Right ventricle myocardium inferior (tissue), 1 donor: ENCODE measurements at regions of chr11 and their contacts with region 1.

Region 1: DNA sequence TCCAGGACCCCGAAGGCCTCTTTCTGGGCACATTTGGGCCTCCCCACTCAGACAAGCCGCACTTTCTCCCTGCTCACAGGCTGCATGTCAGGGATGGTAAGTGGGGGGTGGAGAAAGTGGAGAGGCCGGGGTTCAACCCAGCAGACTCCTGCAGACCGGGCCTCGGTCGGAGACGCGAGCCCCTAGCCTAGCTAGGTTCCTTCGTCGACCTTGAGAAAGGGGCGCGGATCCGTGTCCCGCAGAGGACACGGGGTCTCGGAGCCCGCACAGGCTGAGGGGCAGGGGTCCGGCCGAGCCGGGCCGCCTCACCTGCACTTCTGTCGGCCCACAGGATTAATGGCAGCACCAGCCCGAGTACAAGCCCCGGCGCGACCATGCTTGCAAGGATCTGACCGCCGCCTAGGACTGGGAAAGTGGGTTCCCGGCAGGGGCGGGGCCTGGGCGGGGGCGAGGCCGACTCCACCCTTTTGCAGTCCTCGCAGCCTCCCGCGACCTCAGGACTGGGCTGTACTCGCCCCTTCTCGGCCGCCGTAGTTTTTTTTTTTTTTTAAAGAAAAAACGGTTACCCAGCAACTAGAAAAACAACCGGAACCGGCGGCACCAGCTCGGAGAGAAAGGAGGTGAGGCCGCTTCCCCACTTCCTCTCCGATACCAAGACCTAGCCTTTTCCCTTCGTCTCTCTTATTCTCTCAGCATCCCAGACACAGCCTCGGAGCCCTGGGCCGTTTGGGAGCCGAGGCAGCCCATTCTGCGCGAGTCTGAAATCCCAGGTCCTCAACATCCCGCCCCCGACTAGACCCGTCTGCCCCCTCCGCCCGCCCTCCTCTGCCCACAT is at the starts of genes SIAE and SPA17:
- DNase-seq: peak; percentile 96
- ATAC-seq: peak; percentile 100
- total RNA-seq, gene SIAE: 83.1 TPM
- total RNA-seq, gene SPA17: 2.6 TPM

Region 2: DNA sequence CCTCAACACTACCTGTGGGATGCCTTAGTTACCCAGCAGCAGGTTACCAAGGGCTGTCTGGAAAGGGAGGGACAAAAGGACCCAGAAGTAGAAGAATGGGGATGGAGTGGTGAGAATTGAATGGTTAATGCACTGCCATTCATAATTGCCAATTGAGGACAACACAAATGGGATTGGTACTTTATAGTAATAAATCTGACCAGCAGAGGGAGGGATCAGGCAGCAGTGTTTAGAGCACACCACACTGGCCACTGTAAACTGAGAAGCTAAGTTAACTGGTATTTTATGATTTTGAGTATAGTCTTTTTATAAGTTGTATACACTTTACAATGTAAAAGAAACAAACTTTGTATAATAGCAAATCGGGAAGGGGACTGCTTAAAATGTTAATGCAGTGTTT is 40.2 kb before region 1 on chr11:
- intact Hi-C with region 1: no loop called
- DNase-seq: no peak
- ATAC-seq: no peak

Region 3: GRCh38 chr11:124717786-124718651 is 44.5 kb after region 1 on chr11:
- intact Hi-C with region 1: loop called (anchors 5 kb)
- DNase-seq: no peak
- ATAC-seq: peak; percentile 57

Region 4: DNA sequence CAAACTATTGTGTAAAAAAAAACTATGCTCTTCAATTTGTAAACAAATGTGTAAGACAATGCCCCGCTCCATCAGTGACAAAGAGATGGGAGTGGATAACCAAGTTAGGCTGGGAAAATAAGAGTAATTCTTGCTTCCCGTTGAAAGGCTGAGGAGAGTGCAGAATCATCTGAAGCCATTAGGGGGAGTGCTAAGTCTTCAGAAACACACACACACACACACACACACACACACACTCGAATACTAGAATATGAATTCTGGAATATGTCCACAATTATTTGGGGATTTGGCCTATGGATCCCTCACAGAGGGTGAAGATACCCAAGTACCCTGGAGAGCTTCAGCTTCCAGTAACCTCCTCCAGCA is 163.9 kb after region 1 on chr11:
- intact Hi-C with region 1: loop called (anchors 1 kb)
- DNase-seq: no peak
- ATAC-seq: peak; percentile 66